Activated CD8-positive, alpha-beta T cell treated with anti-CD3 and anti-CD28 coated beads, Interleukin-2, amount 10 ng/mL, durations not matched to agents 7 days and 5 days (primary cell): ENCODE measurements at regions of chr19 and their contacts with region 1.

Region 1: DNA sequence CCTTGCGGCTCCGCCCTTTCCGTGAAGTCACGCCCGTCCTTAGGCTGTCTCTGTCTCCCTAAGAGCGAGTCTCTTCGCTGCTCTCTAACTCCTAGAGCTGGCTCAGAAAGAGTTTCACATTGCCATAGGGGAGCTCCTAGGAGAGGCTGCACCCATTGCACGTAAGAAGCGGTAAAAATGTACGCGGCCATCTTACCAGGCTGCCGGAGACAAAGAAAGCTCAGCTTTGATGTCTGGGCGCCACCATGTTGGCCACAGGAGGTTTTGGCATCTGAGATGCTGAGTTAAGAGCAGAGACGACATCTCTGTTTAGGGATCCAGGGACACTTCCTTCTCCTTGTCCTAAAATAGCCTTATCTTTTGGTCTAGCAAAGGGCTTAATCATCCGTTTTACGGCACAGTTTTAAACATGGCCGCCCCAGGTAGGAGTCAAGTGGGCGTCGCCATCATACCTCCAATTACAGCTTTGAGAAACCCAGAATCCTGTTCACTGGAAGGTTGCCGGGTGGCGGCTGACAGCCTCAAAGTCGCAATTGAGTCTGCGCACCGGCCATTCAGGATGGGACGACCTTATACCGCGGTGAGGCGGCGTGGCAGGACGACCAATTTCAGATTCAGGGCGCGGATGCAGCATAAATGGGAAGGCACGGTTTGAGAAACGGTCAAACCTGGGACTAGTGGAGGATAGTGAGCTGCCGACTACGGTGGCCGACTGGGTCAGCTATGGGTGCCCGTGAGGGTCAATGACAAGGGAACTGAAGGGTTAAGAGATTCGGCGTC is at the start of gene ZNF793:
- DNase-seq: peak; percentile 84
- ATAC-seq: peak; percentile 89
- H3K4me3 Mint-ChIP-seq: no peak within 1 kb of the TSS
- H3K27ac Mint-ChIP-seq: no peak within 1 kb of the TSS
- H3K4me1 Mint-ChIP-seq: no peaks in the 10 kb centered on the region
- H3K27me3 Mint-ChIP-seq: no peaks in the 10 kb centered on the region
- total RNA-seq, gene ZNF793: 4.7 to 6.0 TPM

Region 2: DNA sequence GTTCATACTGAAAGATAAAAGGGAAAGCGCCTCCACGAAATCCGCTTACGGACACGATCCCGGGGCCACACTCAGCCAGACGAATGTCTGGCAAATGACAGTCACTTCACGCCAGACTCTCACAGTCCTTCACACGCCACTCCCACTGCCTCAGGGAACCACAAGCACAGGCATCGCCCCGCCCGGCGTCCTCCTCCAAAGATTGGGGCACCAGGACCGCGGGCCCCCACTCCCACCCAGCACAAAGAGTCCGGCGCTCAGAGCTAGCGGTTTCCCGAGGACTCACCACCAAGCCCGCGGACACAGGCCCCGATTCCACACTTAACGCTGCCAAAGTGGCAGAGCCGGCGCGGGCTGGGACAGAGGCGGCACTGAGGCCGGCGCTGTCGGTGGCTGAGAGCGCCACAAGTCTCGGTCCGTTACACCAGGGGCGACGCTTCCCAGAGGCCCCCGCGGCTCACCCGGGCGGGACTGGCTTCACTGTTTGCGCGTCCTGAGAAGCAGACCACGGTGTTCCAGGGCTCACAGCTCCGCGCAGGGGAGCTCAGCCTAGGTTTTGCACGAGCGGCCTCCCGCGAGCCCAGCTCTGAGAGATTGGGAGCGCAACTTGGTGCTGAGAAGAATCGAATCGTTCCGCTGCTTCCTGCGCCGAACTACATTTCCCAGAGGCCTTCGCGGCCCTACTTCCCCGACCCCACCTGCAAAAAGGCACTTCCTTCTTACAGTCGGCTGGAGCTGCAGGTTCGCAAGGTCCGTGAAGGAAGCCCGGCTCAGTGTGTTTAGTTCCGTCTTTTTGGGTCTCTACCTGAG is 39.6 kb before region 1 on chr19 and contains the start of gene ZNF569:
- CTCF ChIA-PET with region 1: interaction called, 3 read pairs
- POLR2A ChIA-PET with region 1: interaction called, 11 read pairs
- DNase-seq: peak; percentile 94
- ATAC-seq: peak; percentile 66
- H3K4me3 Mint-ChIP-seq: peak within 1 kb of the TSS; percentile 91
- H3K27ac Mint-ChIP-seq: peak within 1 kb of the TSS; percentile 95
- H3K4me1 Mint-ChIP-seq: peaks cover 33% of the 10 kb centered on the region
- H3K27me3 Mint-ChIP-seq: no peaks in the 10 kb centered on the region
- total RNA-seq, gene ZNF569: 7.1 to 9.1 TPM

Region 3: GRCh38 chr19:37492213-37492612 is 14.4 kb before region 1 on chr19:
- CTCF ChIA-PET with region 1: no interaction called
- POLR2A ChIA-PET with region 1: no interaction called
- DNase-seq: no peak
- ATAC-seq: no peak
- H3K4me3 Mint-ChIP-seq: no peak overlapping the region
- H3K27ac Mint-ChIP-seq: no peak overlapping the region
- H3K4me1 Mint-ChIP-seq: no peaks in the 10 kb centered on the region
- H3K27me3 Mint-ChIP-seq: no peaks in the 10 kb centered on the region